IMR-90 (cell line): ENCODE measurements at regions of chr2 and their contacts with region 1.

Region 1: GRCh38 chr2:200306196-200306930 is at the start of gene SPATS2L:
- DNase-seq: peak; percentile 86
- ATAC-seq: peak; percentile 78
- H3K4me3 ChIP-seq: peak within 1 kb of the TSS; percentile 53
- H3K27ac ChIP-seq: peak within 1 kb of the TSS; percentile 87
- H3K4me1 ChIP-seq: peaks cover 16% of the 10 kb centered on the region; the same call in 1 of the 2 replicates
- H3K27me3 ChIP-seq: no peaks in the 10 kb centered on the region
- CTCF ChIP-seq: no peak
- POLR2A ChIP-seq: peak; percentile 68; the same call in 1 of the 2 replicates
- RAD21 ChIP-seq: no peak
- total RNA-seq, gene SPATS2L: 118 and 145 TPM in 2 replicates

Region 2: DNA sequence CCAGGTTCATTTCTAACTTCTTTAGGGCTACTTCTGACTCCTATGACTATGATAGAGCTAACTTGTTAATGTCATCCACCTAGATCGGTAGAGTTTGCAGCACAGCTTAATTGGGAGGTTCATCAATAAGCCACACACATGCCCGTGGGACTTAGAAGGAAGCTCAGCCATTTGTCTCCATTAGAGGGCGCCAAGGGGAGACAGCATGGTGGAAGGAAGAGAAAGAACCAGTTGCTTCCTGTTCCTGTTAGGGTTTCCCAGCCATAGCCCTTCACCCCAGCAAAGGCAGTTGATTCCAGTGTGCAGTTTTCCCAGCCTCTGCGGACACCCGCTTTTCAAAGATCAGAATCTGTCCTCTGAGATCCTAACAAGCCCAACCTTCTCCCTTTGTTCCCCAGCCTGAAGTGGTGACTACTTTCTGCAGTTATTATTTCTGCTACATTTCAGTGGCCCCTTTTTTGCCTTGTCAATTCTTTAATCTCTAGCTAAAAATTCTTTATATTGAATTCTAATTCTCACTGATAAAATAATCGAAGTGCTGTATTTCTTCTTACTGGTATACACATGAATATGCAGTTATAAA is 320.6 kb before region 1 on chr2:
- CTCF ChIA-PET with region 1: interaction called, 6 read pairs
- POLR2A ChIA-PET with region 1: no interaction called
- dilution Hi-C with region 1: no loop called
- in situ Hi-C with region 1: loop called (anchors 10 kb)
- intact Hi-C with region 1: loop called (anchors 1 kb)
- DNase-seq: peak; percentile 81
- ATAC-seq: peak; percentile 66
- H3K4me3 ChIP-seq: no peak overlapping the region
- H3K27ac ChIP-seq: no peak overlapping the region
- H3K4me1 ChIP-seq: peaks cover 6% of the 10 kb centered on the region; the same call in 1 of the 2 replicates
- H3K27me3 ChIP-seq: no peaks in the 10 kb centered on the region
- CTCF ChIP-seq: peak; percentile 71
- POLR2A ChIP-seq: no peak
- RAD21 ChIP-seq: peak; percentile 80

Region 3: DNA sequence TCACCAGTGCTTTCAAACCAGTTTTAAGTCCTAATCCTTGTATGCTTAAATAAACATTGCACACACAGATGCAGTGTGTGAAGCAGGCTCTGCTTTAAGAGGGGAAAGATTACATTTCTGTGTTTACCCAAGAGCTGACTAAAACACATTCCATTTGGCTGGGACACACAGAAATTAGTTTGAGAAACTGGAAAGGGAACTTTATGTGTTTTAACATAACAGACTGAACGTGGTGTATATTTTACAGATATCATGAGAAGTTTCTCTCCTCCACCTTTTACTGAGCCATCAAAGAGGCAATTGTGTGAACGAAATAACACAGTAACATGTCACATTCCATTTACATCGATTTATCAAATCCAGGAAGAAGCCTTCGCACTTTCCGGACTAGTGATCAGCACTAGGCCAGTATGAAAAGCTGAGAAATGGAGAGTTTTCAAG is 229.1 kb before region 1 on chr2:
- CTCF ChIA-PET with region 1: no interaction called
- POLR2A ChIA-PET with region 1: no interaction called
- dilution Hi-C with region 1: no loop called
- in situ Hi-C with region 1: no loop called
- intact Hi-C with region 1: loop called (anchors 2 kb)
- DNase-seq: peak; percentile 95
- ATAC-seq: peak; percentile 96
- H3K4me3 ChIP-seq: no peak overlapping the region
- H3K27ac ChIP-seq: peak overlapping the region; percentile 36; the same call in 1 of the 2 replicates
- H3K4me1 ChIP-seq: peaks cover 8% of the 10 kb centered on the region
- H3K27me3 ChIP-seq: no peaks in the 10 kb centered on the region; the same call in 1 of the 2 replicates
- CTCF ChIP-seq: no peak
- POLR2A ChIP-seq: no peak
- RAD21 ChIP-seq: no peak

Region 4: GRCh38 chr2:200252265-200253067 is 53.9 kb before region 1 on chr2:
- CTCF ChIA-PET with region 1: interaction called, 3 read pairs
- POLR2A ChIA-PET with region 1: no interaction called
- dilution Hi-C with region 1: no loop called
- in situ Hi-C with region 1: no loop called
- intact Hi-C with region 1: loop called (anchors 1 kb)
- DNase-seq: peak; percentile 93
- ATAC-seq: peak; percentile 81
- H3K4me3 ChIP-seq: no peak overlapping the region
- H3K27ac ChIP-seq: peak overlapping the region; percentile 87
- H3K4me1 ChIP-seq: peaks cover 20% of the 10 kb centered on the region
- H3K27me3 ChIP-seq: no peaks in the 10 kb centered on the region
- CTCF ChIP-seq: no peak
- POLR2A ChIP-seq: no peak
- RAD21 ChIP-seq: no peak; the same call in 1 of the 2 replicates

Region 5: GRCh38 chr2:200405599-200406298 is 99.4 kb after region 1 on chr2:
- CTCF ChIA-PET with region 1: interaction called, 4 read pairs
- POLR2A ChIA-PET with region 1: no interaction called
- dilution Hi-C with region 1: no loop called
- in situ Hi-C with region 1: no loop called
- intact Hi-C with region 1: loop called (anchors 5 kb)
- DNase-seq: peak; percentile 95
- ATAC-seq: peak; percentile 66
- H3K4me3 ChIP-seq: no peak overlapping the region
- H3K27ac ChIP-seq: peak overlapping the region; percentile 96
- H3K4me1 ChIP-seq: peaks cover 27% of the 10 kb centered on the region
- H3K27me3 ChIP-seq: no peaks in the 10 kb centered on the region
- CTCF ChIP-seq: no peak
- POLR2A ChIP-seq: no peak
- RAD21 ChIP-seq: no peak; the same call in 1 of the 2 replicates